ENCODE measurements at regions of chr16 and their contacts with region 1.

Region 1: GRCh38 chr16:67150833-67151396 is at the start of gene B3GNT9:
- DNase-seq: peak; percentile 41
- H3K4me3 Mint-ChIP-seq: peak within 1 kb of the TSS; percentile 68
- H3K27ac Mint-ChIP-seq: peak within 1 kb of the TSS; percentile 74
- H3K4me1 Mint-ChIP-seq: peaks cover 39% of the 10 kb centered on the region
- H3K27me3 Mint-ChIP-seq: peaks cover 1% of the 10 kb centered on the region
- total RNA-seq, gene B3GNT9: 7.1 to 7.2 TPM

Region 2: GRCh38 chr16:67137605-67138004 is 13.3 kb before region 1 on chr16:
- CTCF ChIA-PET with region 1: interaction called, 18 read pairs
- POLR2A ChIA-PET with region 1: no interaction called
- DNase-seq: no peak
- H3K4me3 Mint-ChIP-seq: no peak overlapping the region
- H3K27ac Mint-ChIP-seq: no peak overlapping the region
- H3K4me1 Mint-ChIP-seq: no peaks in the 10 kb centered on the region
- H3K27me3 Mint-ChIP-seq: no peaks in the 10 kb centered on the region